IMR-90 (cell line): ENCODE measurements at regions of chr3 and their contacts with region 1.

Region 1: GRCh38 chr3:12508291-12508700 is 24.0 kb downstream of the TSEN2 start:
- DNase-seq: peak; percentile 100
- ATAC-seq: peak; percentile 96
- H3K4me3 ChIP-seq: no peak overlapping the region
- H3K27ac ChIP-seq: peak overlapping the region; percentile 81
- H3K4me1 ChIP-seq: peaks cover 12% of the 10 kb centered on the region
- H3K27me3 ChIP-seq: no peaks in the 10 kb centered on the region
- CTCF ChIP-seq: no peak
- POLR2A ChIP-seq: no peak
- RAD21 ChIP-seq: no peak

Region 2: GRCh38 chr3:12040902-12041301 is 467.4 kb before region 1 on chr3:
- CTCF ChIA-PET with region 1: no interaction called
- POLR2A ChIA-PET with region 1: no interaction called
- dilution Hi-C with region 1: no loop called
- in situ Hi-C with region 1: no loop called
- intact Hi-C with region 1: no loop called
- DNase-seq: no peak
- ATAC-seq: no peak
- H3K4me3 ChIP-seq: no peak overlapping the region
- H3K27ac ChIP-seq: no peak overlapping the region
- H3K4me1 ChIP-seq: no peaks in the 10 kb centered on the region
- H3K27me3 ChIP-seq: no peaks in the 10 kb centered on the region
- CTCF ChIP-seq: no peak
- POLR2A ChIP-seq: no peak
- RAD21 ChIP-seq: no peak

Region 3: DNA sequence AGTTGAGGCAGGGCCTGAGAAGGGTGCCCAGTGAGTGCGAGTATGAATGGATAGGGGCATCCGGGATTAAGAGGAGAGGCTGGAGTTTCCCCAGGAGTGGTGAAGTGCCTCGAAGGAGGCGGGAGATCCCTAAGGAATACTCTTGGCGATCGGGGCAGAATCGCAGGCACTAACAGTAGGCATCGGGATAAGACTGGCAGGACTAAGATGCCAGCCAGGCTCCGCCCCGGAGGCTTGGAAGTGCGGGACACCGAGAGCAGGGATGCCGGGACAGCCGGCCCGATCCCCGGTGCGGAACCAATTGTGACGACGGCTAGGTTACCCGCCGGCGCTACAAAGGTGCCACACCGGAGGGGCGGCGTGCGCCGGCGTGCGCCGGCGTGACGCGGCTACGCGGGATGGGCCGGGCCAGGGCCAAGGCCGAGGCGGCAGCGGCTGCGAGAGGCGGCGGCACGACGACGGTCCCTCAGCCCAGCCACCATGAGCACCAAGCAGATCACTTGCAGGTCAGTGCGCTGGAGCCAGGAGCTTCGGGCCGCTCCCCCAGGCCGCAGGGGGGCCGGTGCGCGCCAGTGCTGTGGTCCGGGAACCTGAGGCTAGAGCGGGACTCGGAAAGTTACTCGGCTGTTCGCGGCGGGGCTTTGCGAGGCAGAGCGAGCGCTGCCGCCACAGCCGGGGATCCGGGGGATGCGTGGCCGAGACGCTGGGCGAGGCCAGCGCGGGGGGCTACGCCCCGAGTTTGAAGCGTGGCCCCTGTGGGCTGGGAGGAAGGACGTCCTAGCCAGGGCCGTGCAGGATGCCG is 48.6 kb after region 1 on chr3 and contains the start of gene MKRN2:
- CTCF ChIA-PET with region 1: no interaction called
- POLR2A ChIA-PET with region 1: no interaction called
- dilution Hi-C with region 1: no loop called
- in situ Hi-C with region 1: no loop called
- intact Hi-C with region 1: loop called (anchors 5 kb)
- DNase-seq: peak; percentile 78
- ATAC-seq: peak; percentile 93
- H3K4me3 ChIP-seq: peak within 1 kb of the TSS; percentile 85
- H3K27ac ChIP-seq: peak within 1 kb of the TSS; percentile 91
- H3K4me1 ChIP-seq: peaks cover 5% of the 10 kb centered on the region
- H3K27me3 ChIP-seq: no peaks in the 10 kb centered on the region
- CTCF ChIP-seq: no peak
- POLR2A ChIP-seq: peak; percentile 93
- RAD21 ChIP-seq: no peak; the same call in 1 of the 2 replicates
- total RNA-seq, gene MKRN2: 65.6 and 65.8 TPM in 2 replicates

Region 4: GRCh38 chr3:12719984-12720898 is 211.9 kb after region 1 on chr3:
- CTCF ChIA-PET with region 1: interaction called, 3 read pairs
- POLR2A ChIA-PET with region 1: no interaction called
- dilution Hi-C with region 1: no loop called
- in situ Hi-C with region 1: no loop called
- intact Hi-C with region 1: loop called (anchors 1 kb)
- DNase-seq: peak; percentile 82
- ATAC-seq: peak; percentile 98
- H3K4me3 ChIP-seq: peak overlapping the region; percentile 28
- H3K27ac ChIP-seq: no peak overlapping the region
- H3K4me1 ChIP-seq: no peaks in the 10 kb centered on the region
- H3K27me3 ChIP-seq: no peaks in the 10 kb centered on the region
- CTCF ChIP-seq: peak; percentile 96
- POLR2A ChIP-seq: no peak
- RAD21 ChIP-seq: peak; percentile 84